MCF 10A (cell line): ENCODE measurements at regions of chr2 and their contacts with region 1.

Region 1: GRCh38 chr2:55961318-55961911 is 37.8 kb upstream of the EFEMP1 start:
- DNase-seq: peak; percentile 74
- H3K4me3 Mint-ChIP-seq: no peak overlapping the region
- H3K27ac Mint-ChIP-seq: peak overlapping the region; percentile 25
- H3K4me1 Mint-ChIP-seq: peaks cover 29% of the 10 kb centered on the region
- H3K27me3 Mint-ChIP-seq: no peaks in the 10 kb centered on the region
- CTCF ChIP-seq: peak; percentile 43

Region 2: DNA sequence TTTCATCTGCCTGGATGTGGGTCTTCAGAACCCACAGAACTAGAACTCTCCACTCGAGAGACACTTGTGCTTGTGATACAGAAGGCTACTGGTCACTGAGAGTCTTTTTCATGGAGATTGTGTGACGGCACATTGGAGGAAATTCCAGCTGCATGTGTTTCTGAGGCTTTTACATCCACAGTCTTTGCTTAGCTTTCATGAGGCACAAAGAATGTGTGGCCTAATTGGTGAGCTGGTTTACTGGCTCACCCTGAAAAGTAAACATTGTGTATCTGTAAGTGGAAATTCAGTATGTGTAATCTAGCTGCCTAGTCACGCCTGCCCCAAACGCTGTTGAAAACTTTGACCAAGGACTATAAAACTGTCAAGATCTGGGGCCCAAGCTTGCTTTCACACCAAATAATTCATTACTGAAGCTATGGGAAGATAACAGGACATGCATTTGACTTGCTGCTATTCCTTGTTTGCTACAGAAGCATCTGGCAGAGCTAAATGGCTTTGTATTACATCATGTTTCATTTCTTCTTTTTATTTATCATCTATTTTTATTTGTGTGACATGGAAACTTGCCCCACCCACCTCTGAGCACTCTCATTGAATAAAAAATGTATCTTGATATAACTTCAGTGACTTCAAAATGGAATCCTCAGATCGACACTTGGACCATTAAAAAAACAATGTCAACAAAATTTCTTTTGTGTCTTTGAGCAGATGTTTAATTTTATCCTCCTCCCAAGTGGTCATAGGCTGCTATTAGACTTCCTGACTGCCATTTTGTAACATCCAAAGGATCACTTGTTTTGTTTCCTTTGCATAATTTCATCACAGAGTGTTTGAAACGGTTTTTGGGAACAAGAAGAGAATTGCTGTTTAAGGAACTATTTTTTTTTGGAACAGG is 118.1 kb before region 1 on chr2:
- CTCF ChIA-PET with region 1: interaction called, 13 read pairs
- POLR2A ChIA-PET with region 1: interaction called, 5 read pairs
- intact Hi-C with region 1: no loop called
- DNase-seq: peak; percentile 64
- H3K4me3 Mint-ChIP-seq: no peak overlapping the region
- H3K27ac Mint-ChIP-seq: no peak overlapping the region
- H3K4me1 Mint-ChIP-seq: no peaks in the 10 kb centered on the region
- H3K27me3 Mint-ChIP-seq: no peaks in the 10 kb centered on the region
- CTCF ChIP-seq: no peak

Region 3: GRCh38 chr2:55875434-55876135 is 85.8 kb before region 1 on chr2:
- CTCF ChIA-PET with region 1: interaction called, 6 read pairs
- POLR2A ChIA-PET with region 1: interaction called, 10 read pairs
- intact Hi-C with region 1: no loop called
- DNase-seq: no peak
- H3K4me3 Mint-ChIP-seq: no peak overlapping the region
- H3K27ac Mint-ChIP-seq: no peak overlapping the region
- H3K4me1 Mint-ChIP-seq: peaks cover 9% of the 10 kb centered on the region
- H3K27me3 Mint-ChIP-seq: no peaks in the 10 kb centered on the region
- CTCF ChIP-seq: no peak

Region 4: DNA sequence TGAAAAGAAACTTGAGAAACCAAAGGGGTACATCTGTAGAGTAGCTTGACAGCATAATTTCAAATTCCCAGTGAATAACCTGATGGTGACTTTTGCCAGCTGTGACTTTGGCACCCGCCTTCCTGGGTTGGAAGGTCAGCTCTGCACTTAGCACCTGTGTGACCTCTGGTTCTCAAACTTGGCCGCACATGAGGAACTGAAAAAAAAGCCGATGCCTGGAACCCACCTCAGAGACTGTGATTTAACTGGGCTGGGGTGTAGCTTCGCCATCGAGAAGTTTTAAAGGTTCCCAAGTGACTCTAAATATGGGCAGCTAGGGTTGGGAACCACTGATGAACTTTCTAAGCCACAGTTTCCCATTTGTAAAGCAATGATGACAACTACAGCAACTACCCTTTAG is 44.3 kb before region 1 on chr2:
- CTCF ChIA-PET with region 1: interaction called, 14 read pairs
- POLR2A ChIA-PET with region 1: interaction called, 4 read pairs
- intact Hi-C with region 1: no loop called
- DNase-seq: no peak
- H3K4me3 Mint-ChIP-seq: no peak overlapping the region
- H3K27ac Mint-ChIP-seq: no peak overlapping the region
- H3K4me1 Mint-ChIP-seq: peaks cover 10% of the 10 kb centered on the region
- H3K27me3 Mint-ChIP-seq: no peaks in the 10 kb centered on the region
- CTCF ChIP-seq: no peak

Region 5: DNA sequence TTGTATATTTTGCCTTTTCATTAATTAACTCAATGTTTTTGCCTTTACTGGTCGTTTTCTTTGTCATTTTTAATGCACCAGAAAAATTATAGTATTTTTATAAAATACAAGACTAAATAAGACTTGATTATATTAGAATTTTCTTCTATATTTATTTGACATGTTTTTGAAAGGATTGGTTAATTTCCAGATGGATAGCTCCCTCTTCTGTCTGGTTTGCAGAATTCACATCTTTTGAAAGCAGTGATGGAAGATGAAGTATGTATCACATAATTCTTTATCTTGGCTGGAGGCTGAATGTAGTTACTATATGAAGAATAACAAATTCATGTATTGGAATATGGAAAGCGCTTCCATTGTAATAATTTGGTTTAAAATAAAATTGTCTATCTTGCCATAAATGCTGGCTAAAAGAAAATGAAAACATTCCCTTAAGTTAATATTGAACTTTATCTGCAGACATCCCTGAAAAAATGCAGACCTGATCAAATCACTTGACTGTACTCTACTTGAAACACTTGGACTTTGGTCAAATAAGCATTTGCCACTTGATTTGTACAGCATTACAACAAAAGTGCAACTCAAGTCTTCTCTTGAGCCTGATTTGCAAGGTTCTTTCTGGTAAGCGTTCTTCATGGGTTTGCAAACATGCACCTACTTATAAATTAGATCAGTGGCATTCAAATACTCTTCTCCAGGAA is 48.5 kb after region 1 on chr2:
- CTCF ChIA-PET with region 1: interaction called, 7 read pairs
- POLR2A ChIA-PET with region 1: no interaction called
- intact Hi-C with region 1: loop called (anchors 2 kb)
- DNase-seq: peak; percentile 60
- H3K4me3 Mint-ChIP-seq: no peak overlapping the region
- H3K27ac Mint-ChIP-seq: no peak overlapping the region
- H3K4me1 Mint-ChIP-seq: peaks cover 5% of the 10 kb centered on the region
- H3K27me3 Mint-ChIP-seq: no peaks in the 10 kb centered on the region
- CTCF ChIP-seq: peak; percentile 68

Region 6: GRCh38 chr2:56244911-56245530 is 283.6 kb after region 1 on chr2:
- CTCF ChIA-PET with region 1: no interaction called
- POLR2A ChIA-PET with region 1: no interaction called
- intact Hi-C with region 1: no loop called
- DNase-seq: peak; percentile 40
- H3K4me3 Mint-ChIP-seq: no peak overlapping the region
- H3K27ac Mint-ChIP-seq: no peak overlapping the region
- H3K4me1 Mint-ChIP-seq: peaks cover 6% of the 10 kb centered on the region
- H3K27me3 Mint-ChIP-seq: no peaks in the 10 kb centered on the region
- CTCF ChIP-seq: no peak

Region 7: DNA sequence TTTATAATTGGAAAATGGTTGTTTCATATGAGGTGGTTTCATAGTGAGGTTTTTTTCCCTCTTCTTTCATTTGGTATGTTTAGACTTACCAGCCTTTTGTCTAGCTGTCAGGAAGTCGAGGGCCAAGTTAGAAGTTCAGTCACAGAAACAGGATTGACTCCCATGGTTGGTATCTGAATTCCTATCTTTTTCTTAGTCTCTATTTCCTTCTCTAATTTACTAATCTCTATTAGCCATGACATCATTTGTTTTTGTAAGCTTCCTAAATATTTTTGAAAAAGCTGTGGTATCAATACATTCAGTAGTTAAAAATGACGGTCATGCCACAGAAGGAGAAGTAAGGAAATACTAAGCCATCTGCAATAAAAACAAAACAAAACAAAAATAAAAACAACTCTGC is 429.2 kb after region 1 on chr2:
- CTCF ChIA-PET with region 1: no interaction called
- POLR2A ChIA-PET with region 1: no interaction called
- intact Hi-C with region 1: no loop called
- DNase-seq: no peak
- H3K4me3 Mint-ChIP-seq: no peak overlapping the region
- H3K27ac Mint-ChIP-seq: no peak overlapping the region
- H3K4me1 Mint-ChIP-seq: no peaks in the 10 kb centered on the region
- H3K27me3 Mint-ChIP-seq: no peaks in the 10 kb centered on the region
- CTCF ChIP-seq: no peak